ENCODE measurements at regions of chr6 and their contacts with region 1.

Region 1: DNA sequence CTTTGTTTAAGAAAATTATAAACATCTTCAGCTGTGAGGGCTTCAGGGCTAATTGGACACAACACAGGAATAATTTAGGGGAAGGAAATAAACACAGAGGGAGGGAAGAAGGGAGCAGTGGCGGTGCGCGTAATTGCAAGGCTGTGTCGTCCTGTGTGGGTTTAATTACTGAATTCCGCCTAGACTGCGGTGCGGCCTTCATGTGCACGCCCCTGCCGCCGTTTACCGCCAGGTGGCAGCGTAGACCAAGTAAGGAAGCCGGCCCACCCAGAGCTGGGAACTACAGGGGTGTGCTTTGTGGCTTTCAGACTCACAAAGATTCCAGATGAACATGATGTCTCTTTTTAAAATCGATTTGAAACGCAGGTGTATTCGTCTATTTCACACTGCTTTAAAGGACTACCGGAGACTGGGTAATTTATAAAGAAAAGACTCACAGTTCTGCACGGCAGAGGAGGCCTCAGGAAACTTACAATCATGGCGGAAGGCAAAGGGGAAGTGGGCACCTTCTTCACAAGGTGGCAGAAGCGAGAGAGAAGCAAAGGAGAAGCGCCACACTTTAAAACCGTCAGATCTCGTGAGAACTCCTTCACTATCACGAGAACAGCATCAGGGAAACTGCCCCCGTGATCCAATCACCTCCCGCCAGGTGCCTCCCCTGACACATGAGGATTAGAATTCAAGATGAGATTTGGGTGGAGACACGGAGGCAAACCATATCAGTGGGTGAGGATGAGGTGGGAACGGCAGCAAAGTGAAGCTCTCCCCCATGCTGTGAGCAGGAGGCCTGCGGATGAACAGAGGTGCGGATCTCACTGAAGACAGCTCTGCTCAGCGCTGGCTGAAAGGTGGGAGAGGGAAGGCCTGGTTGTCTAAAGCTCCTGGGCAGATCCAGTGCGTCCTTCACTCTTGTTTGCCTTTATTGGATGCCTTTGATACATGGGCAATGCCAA is 222.0 kb upstream of the PDE10A start:
- DNase-seq: peak; percentile 61
- H3K4me3 Mint-ChIP-seq: no peak overlapping the region
- H3K27ac Mint-ChIP-seq: no peak overlapping the region
- H3K4me1 Mint-ChIP-seq: peaks cover 4% of the 10 kb centered on the region
- H3K27me3 Mint-ChIP-seq: no peaks in the 10 kb centered on the region

Region 2: DNA sequence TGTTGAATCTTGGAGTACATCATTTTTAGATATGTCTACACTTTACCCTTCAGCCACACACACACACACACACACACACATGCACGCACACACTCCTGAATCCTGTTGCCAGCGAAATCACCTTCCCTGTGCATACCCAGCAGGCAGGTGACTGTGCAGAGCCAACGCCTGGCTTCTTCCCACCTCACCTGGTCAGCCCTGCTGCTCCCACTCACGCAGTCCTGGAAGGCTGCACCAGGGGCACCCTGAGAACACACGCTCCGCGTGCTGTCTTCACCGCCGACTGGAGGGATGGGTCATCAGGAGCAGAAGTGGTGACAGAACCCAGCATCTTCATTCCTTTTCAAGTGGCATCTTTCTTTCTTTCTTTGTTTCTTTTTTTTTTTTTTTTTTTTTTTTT is 188.0 kb after region 1 on chr6:
- CTCF ChIA-PET with region 1: no interaction called
- POLR2A ChIA-PET with region 1: no interaction called
- DNase-seq: no peak
- H3K4me3 Mint-ChIP-seq: no peak overlapping the region
- H3K27ac Mint-ChIP-seq: no peak overlapping the region
- H3K4me1 Mint-ChIP-seq: no peaks in the 10 kb centered on the region
- H3K27me3 Mint-ChIP-seq: peaks cover 1% of the 10 kb centered on the region

Region 3: DNA sequence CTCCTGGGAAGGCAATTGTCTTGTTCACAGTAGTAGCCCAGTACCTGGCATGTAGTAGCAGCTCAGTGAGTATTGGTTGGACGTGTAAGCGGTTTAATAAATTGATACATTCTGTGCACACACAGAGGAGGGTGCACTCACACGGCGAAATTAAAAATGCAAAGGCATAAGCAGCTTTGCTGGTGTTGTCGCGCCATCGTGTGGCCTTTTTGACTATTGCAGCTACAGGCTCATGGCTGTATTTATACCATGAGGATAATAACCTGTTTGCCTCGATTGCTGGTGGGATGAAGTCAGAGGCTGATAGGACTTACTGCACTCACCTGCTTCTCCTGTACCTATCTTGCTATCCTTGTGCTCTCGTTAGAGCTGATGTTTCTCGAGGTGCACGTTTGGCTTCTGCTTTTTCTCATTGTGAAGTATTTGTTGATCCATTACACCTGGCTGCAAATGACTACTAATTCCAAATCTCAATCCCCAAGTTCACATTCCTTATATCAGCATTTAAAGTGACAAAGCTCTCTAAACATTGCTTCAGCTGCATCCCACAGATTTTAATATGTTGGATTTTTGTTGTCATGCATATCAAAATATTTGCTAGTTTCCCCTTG is 221.1 kb after region 1 on chr6:
- CTCF ChIA-PET with region 1: interaction called, 29 read pairs
- POLR2A ChIA-PET with region 1: no interaction called
- DNase-seq: peak; percentile 68
- H3K4me3 Mint-ChIP-seq: no peak overlapping the region
- H3K27ac Mint-ChIP-seq: no peak overlapping the region
- H3K4me1 Mint-ChIP-seq: peaks cover 2% of the 10 kb centered on the region
- H3K27me3 Mint-ChIP-seq: peaks cover 18% of the 10 kb centered on the region

Measured in activated CD4-positive, alpha-beta memory T cell treated with anti-CD3 and anti-CD28 coated beads, Interleukin-2, amount 10 ng/mL, durations not matched to agents 7 days and 5 days (primary cell).